Motor neuron (in vitro differentiated cells): ENCODE measurements at regions of chr1 and their contacts with region 1.

Region 1: GRCh38 chr1:242448910-242449645 is 75.4 kb downstream of the PLD5 start:
- ATAC-seq: peak in 5 of 8 experiments; percentile 83 to 93 (median 90)
- H3K4me3 ChIP-seq: peak overlapping the region in 1 of 5 donors; percentile 3
- H3K27ac ChIP-seq: peak overlapping the region; percentile 38 to 51
- H3K4me1 ChIP-seq: peaks cover 41% of the 10 kb centered on the region in 2 donors

Region 2: GRCh38 chr1:242023805-242024204 is 425.3 kb before region 1 on chr1:
- in situ Hi-C with region 1: loop called in 3 of 9 experiments (anchors 10 to 25 kb)
- ATAC-seq: no peak
- H3K4me3 ChIP-seq: no peak overlapping the region
- H3K27ac ChIP-seq: no peak overlapping the region
- H3K4me1 ChIP-seq: peaks cover 3 to 12% of the 10 kb centered on the region in 2 donors